IMR-90 (cell line): ENCODE measurements at regions of chr14 and their contacts with region 1.

Region 1: GRCh38 chr14:76050797-76051392 is 65.3 kb downstream of the IFT43 start:
- DNase-seq: peak; percentile 65
- ATAC-seq: peak; percentile 94
- H3K4me3 ChIP-seq: no peak overlapping the region
- H3K27ac ChIP-seq: no peak overlapping the region
- H3K4me1 ChIP-seq: no peaks in the 10 kb centered on the region
- H3K27me3 ChIP-seq: no peaks in the 10 kb centered on the region
- CTCF ChIP-seq: peak; percentile 86
- POLR2A ChIP-seq: no peak
- RAD21 ChIP-seq: peak; percentile 93

Region 2: GRCh38 chr14:75655235-75655634 is 395.7 kb before region 1 on chr14:
- CTCF ChIA-PET with region 1: no interaction called
- POLR2A ChIA-PET with region 1: no interaction called
- dilution Hi-C with region 1: no loop called
- in situ Hi-C with region 1: no loop called
- intact Hi-C with region 1: no loop called
- DNase-seq: no peak
- ATAC-seq: no peak
- H3K4me3 ChIP-seq: no peak overlapping the region
- H3K27ac ChIP-seq: no peak overlapping the region
- H3K4me1 ChIP-seq: no peaks in the 10 kb centered on the region
- H3K27me3 ChIP-seq: no peaks in the 10 kb centered on the region
- CTCF ChIP-seq: no peak
- POLR2A ChIP-seq: no peak
- RAD21 ChIP-seq: no peak

Region 3: GRCh38 chr14:76117789-76118484 is 67.0 kb after region 1 on chr14:
- CTCF ChIA-PET with region 1: interaction called, 12 read pairs
- POLR2A ChIA-PET with region 1: no interaction called
- dilution Hi-C with region 1: no loop called
- in situ Hi-C with region 1: no loop called
- intact Hi-C with region 1: no loop called
- DNase-seq: no peak
- ATAC-seq: no peak
- H3K4me3 ChIP-seq: no peak overlapping the region
- H3K27ac ChIP-seq: no peak overlapping the region
- H3K4me1 ChIP-seq: no peaks in the 10 kb centered on the region
- H3K27me3 ChIP-seq: peaks cover 18% of the 10 kb centered on the region
- CTCF ChIP-seq: no peak
- POLR2A ChIP-seq: no peak
- RAD21 ChIP-seq: no peak

Region 4: GRCh38 chr14:76352639-76353281 is 301.9 kb after region 1 on chr14:
- CTCF ChIA-PET with region 1: interaction called, 9 read pairs
- POLR2A ChIA-PET with region 1: no interaction called
- dilution Hi-C with region 1: no loop called
- in situ Hi-C with region 1: loop called (anchors 5 kb)
- intact Hi-C with region 1: loop called (anchors 1 kb)
- DNase-seq: peak; percentile 26
- ATAC-seq: peak; percentile 96
- H3K4me3 ChIP-seq: 0 out of 2 replicates have a peak overlapping the region, but pooled peaks have one; percentile 22
- H3K27ac ChIP-seq: no peak overlapping the region
- H3K4me1 ChIP-seq: no peaks in the 10 kb centered on the region
- H3K27me3 ChIP-seq: peaks cover 14% of the 10 kb centered on the region
- CTCF ChIP-seq: peak; percentile 68
- POLR2A ChIP-seq: no peak
- RAD21 ChIP-seq: peak; percentile 62

Region 5: DNA sequence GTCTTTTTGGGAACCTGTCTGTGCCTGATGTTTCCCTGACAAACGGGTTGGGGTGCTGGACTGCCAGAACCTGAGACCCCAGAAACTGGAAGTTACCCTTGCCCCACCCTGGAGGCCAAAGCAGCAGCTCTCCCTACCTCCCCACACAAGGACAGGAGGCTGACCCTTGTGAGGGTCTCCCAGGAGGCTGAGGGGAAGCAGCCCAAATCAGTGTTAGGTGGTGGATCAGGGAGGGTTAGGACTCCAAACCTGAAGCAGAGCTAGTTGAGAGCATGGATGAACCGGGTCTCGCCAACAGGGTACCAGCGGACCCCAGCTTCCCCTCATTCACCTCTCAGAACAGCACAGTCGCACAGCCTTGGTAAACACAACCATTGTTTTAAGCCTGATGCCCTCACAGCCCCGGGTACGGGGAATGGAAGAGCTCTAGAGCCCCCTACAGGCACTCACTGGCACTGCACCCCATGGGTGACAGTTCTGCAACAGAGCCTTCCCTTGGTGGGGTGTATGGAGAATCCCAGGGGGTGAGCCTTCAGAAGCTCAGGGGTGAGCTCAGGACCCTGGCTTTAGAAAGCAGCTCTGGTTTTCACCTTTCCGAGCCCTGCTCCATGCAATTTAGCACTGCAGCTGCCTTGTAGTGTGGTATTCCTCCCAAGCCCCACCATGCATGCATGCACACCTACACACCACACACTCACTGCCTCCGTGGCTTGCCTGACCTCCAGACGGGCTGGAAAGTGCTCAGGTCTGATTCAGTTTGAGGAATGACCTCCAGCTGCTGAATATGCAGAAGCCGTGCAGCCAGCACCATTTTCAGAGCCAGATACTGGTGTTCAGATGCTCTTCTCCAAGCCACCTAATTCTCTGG is 336.3 kb after region 1 on chr14:
- CTCF ChIA-PET with region 1: interaction called, 8 read pairs
- POLR2A ChIA-PET with region 1: no interaction called
- dilution Hi-C with region 1: no loop called
- in situ Hi-C with region 1: loop called (anchors 10 kb)
- intact Hi-C with region 1: loop called (anchors 1 kb)
- DNase-seq: peak; percentile 51
- ATAC-seq: peak; percentile 100
- H3K4me3 ChIP-seq: no peak overlapping the region
- H3K27ac ChIP-seq: no peak overlapping the region
- H3K4me1 ChIP-seq: no peaks in the 10 kb centered on the region
- H3K27me3 ChIP-seq: peaks cover 27% of the 10 kb centered on the region
- CTCF ChIP-seq: peak; percentile 87
- POLR2A ChIP-seq: no peak
- RAD21 ChIP-seq: peak; percentile 89

Region 6: GRCh38 chr14:76647697-76648298 is 596.9 kb after region 1 on chr14:
- CTCF ChIA-PET with region 1: interaction called, 3 read pairs
- POLR2A ChIA-PET with region 1: no interaction called
- dilution Hi-C with region 1: no loop called
- in situ Hi-C with region 1: loop called (anchors 10 kb)
- intact Hi-C with region 1: loop called (anchors 1 kb)
- DNase-seq: peak; percentile 59
- ATAC-seq: peak; percentile 93
- H3K4me3 ChIP-seq: no peak overlapping the region
- H3K27ac ChIP-seq: no peak overlapping the region
- H3K4me1 ChIP-seq: no peaks in the 10 kb centered on the region
- H3K27me3 ChIP-seq: no peaks in the 10 kb centered on the region; the same call in 1 of the 2 replicates
- CTCF ChIP-seq: peak; percentile 61
- POLR2A ChIP-seq: no peak
- RAD21 ChIP-seq: peak; percentile 58